CD8-positive, alpha-beta T cell (primary cell): ENCODE measurements at regions of chr11 and their contacts with region 1.

Region 1: GRCh38 chr11:73965076-73965860 is 14.4 kb downstream of the DNAJB13 start:
- DNase-seq: peak in 2 of 9 experiments; percentile 8 to 14
- ATAC-seq: no peak
- H3K4me3 ChIP-seq: no peak overlapping the region
- H3K4me3 Mint-ChIP-seq: no peak overlapping the region
- H3K27ac ChIP-seq: no peak overlapping the region
- H3K27ac Mint-ChIP-seq: peak overlapping the region; percentile 78
- H3K4me1 ChIP-seq: peaks cover 51% of the 10 kb centered on the region
- H3K4me1 Mint-ChIP-seq: peaks cover 44% of the 10 kb centered on the region
- H3K27me3 ChIP-seq: no peaks in the 10 kb centered on the region
- H3K27me3 Mint-ChIP-seq: no peaks in the 10 kb centered on the region
- CTCF ChIP-seq: no peak

Region 2: DNA sequence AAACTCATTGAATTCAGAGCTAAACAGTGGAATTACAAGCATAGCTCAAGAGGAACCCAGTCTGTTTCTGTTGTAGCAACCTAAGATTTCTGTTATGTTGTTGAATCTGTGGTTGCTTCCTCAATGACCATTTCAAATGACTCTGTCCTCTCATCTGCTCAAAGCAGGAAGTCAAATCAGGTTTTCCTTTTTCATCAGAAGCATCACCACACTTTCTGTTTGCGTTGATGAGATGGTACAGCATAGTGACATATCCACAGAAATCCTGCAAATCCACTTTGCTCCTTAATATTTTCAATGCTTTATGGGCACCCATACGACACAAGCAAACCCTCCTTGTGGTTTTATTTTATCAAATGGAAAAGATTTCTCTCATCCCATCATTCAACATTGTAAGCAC is 30.0 kb after region 1 on chr11:
- CTCF ChIA-PET with region 1: interaction called, 7 read pairs
- POLR2A ChIA-PET with region 1: interaction called, 87 read pairs
- intact Hi-C with region 1: loop called in 1 of 2 experiments (anchors 2 kb)
- DNase-seq: peak in 2 of 9 experiments; percentile 81 to 92
- ATAC-seq: peak; percentile 75
- H3K4me3 ChIP-seq: peak overlapping the region; percentile 1 to 28
- H3K4me3 Mint-ChIP-seq: peak overlapping the region; percentile 74
- H3K27ac ChIP-seq: peak overlapping the region; percentile 87 to 98
- H3K27ac Mint-ChIP-seq: peak overlapping the region; percentile 94
- H3K4me1 ChIP-seq: peaks cover 72% of the 10 kb centered on the region
- H3K4me1 Mint-ChIP-seq: peaks cover 73% of the 10 kb centered on the region
- H3K27me3 ChIP-seq: no peaks in the 10 kb centered on the region
- H3K27me3 Mint-ChIP-seq: no peaks in the 10 kb centered on the region
- CTCF ChIP-seq: no peak

Region 3: DNA sequence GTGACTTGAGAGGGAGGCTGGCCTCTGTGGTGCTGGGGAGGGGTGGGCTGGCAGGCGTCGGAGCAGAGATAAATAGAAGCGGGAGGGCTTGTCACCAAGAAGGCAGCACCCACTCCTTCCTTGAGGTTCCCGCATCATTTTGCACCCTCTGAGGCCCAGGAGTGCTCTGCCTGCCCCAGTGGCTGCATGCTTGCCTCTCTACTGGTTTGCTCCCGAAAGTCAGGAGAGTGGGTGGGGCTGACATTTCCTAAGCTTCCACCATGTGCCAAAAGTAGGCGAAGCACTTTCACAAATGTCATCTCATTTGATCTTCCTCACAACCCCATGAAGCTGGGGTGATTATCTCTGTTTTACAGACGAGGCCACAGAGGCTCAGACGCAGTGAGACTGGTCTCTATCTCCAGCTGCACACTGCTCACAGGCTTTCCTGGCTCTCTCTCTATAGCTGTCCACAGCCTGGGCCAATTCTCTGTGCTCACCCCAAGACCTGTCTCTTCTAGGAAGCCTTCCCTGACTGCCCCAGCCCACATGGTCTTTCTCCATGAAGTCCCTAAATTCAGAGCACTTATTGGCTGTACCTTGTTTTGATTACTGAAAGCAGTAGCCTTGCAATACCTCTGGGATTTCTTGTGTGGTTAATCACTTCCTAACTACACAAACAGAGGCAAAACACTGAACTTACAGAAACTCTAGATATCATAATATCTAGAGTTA is 46.2 kb after region 1 on chr11:
- CTCF ChIA-PET with region 1: interaction called, 12 read pairs
- POLR2A ChIA-PET with region 1: interaction called, 428 read pairs
- intact Hi-C with region 1: no loop called
- DNase-seq: peak in 3 of 9 experiments; percentile 27 to 74 (median 34)
- ATAC-seq: peak; percentile 55
- H3K4me3 ChIP-seq: no peak overlapping the region
- H3K4me3 Mint-ChIP-seq: peak overlapping the region; percentile 63
- H3K27ac ChIP-seq: peak overlapping the region; percentile 32 to 52
- H3K27ac Mint-ChIP-seq: peak overlapping the region; percentile 94
- H3K4me1 ChIP-seq: peaks cover 93% of the 10 kb centered on the region
- H3K4me1 Mint-ChIP-seq: peaks cover 88% of the 10 kb centered on the region
- H3K27me3 ChIP-seq: no peaks in the 10 kb centered on the region
- H3K27me3 Mint-ChIP-seq: no peaks in the 10 kb centered on the region
- CTCF ChIP-seq: no peak

Region 4: GRCh38 chr11:74030723-74031676 is 65.7 kb after region 1 on chr11:
- CTCF ChIA-PET with region 1: interaction called, 47 read pairs
- POLR2A ChIA-PET with region 1: interaction called, 10 read pairs
- intact Hi-C with region 1: loop called (anchors 1 kb)
- DNase-seq: peak in 1 of 9 experiments; percentile 36
- ATAC-seq: peak; percentile 33
- H3K4me3 ChIP-seq: no peak overlapping the region
- H3K4me3 Mint-ChIP-seq: peak overlapping the region; percentile 24
- H3K27ac ChIP-seq: peak overlapping the region in 1 of 2 experiments; percentile 64
- H3K27ac Mint-ChIP-seq: peak overlapping the region; percentile 60
- H3K4me1 ChIP-seq: peaks cover 7% of the 10 kb centered on the region
- H3K4me1 Mint-ChIP-seq: peaks cover 25% of the 10 kb centered on the region
- H3K27me3 ChIP-seq: no peaks in the 10 kb centered on the region
- H3K27me3 Mint-ChIP-seq: no peaks in the 10 kb centered on the region
- CTCF ChIP-seq: no peak

Region 5: GRCh38 chr11:74248469-74248868 is 283.2 kb after region 1 on chr11:
- CTCF ChIA-PET with region 1: no interaction called
- POLR2A ChIA-PET with region 1: no interaction called
- intact Hi-C with region 1: loop called in 1 of 2 experiments (anchors 5 kb)
- DNase-seq: no peak
- ATAC-seq: no peak
- H3K4me3 ChIP-seq: no peak overlapping the region
- H3K4me3 Mint-ChIP-seq: no peak overlapping the region
- H3K27ac ChIP-seq: no peak overlapping the region
- H3K27ac Mint-ChIP-seq: no peak overlapping the region
- H3K4me1 ChIP-seq: no peaks in the 10 kb centered on the region
- H3K4me1 Mint-ChIP-seq: no peaks in the 10 kb centered on the region
- H3K27me3 ChIP-seq: no peaks in the 10 kb centered on the region
- H3K27me3 Mint-ChIP-seq: no peaks in the 10 kb centered on the region
- CTCF ChIP-seq: no peak